Common myeloid progenitor, CD34-positive (primary cell): ENCODE measurements at regions of chr20 and their contacts with region 1.

Region 1: GRCh38 chr20:17536944-17537444 is 5.8 kb upstream of the BFSP1 start:
- DNase-seq: peak; percentile 80 to 89 (median 86)
- H3K4me3 ChIP-seq: no peak overlapping the region
- H3K27ac ChIP-seq: no peak overlapping the region
- H3K4me1 ChIP-seq: peaks cover 0 to 7% (median 3%) of the 10 kb centered on the region in 4 experiments
- H3K27me3 ChIP-seq: no peaks in the 10 kb centered on the region

Region 2: GRCh38 chr20:17617551-17618223 is 80.7 kb after region 1 on chr20:
- CTCF ChIA-PET with region 1: interaction called, 33 read pairs
- POLR2A ChIA-PET with region 1: no interaction called
- DNase-seq: peak; percentile 29 to 57 (median 52)
- H3K4me3 ChIP-seq: no peak overlapping the region
- H3K27ac ChIP-seq: no peak overlapping the region
- H3K4me1 ChIP-seq: peaks cover 0 to 31% (median 17%) of the 10 kb centered on the region in 4 experiments
- H3K27me3 ChIP-seq: no peaks in the 10 kb centered on the region